PC-9 (cell line): ENCODE measurements at regions of chr12 and their contacts with region 1.

Region 1: DNA sequence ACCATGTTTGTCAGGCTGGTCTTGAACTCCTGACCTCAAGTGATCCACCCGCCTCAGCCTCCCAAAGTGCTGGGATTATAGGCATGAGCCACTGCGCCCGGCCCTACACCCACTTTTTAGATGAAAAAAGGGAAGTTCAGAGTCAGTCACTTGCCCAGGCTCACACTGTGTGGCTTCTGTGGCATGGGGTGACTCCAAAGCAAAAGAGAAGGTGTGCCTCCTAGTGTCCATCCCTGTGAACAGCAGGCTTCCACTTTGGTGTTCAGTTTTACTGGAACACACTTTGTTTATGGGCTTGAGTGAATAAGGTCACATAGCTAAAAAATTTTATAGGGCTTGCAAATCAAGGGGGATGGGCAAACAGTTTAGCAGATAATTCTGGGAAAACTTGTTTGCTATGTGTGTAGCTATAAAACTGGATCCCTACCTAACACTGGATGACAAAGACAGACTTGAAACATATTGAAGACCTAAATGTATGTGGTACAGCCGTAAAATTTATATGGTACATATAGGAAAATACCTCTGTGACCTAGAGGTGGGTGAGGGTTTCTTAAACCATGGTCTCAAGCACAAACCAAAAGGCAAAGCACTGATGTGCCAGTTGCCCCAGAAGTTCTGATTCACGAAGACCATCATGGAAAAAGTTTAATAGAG is 54.9 kb downstream of the EID3 start:
- DNase-seq: peak; percentile 64 to 68
- H3K4me3 ChIP-seq: no peak overlapping the region
- H3K27ac ChIP-seq: no peak overlapping the region
- H3K4me1 ChIP-seq: 0 out of 2 replicates have a peak, but pooled peaks cover 11% of the 10 kb centered on the region
- H3K27me3 ChIP-seq: no peaks in the 10 kb centered on the region
- CTCF ChIP-seq: peak; percentile 82

Region 2: GRCh38 chr12:104057771-104058197 is 300.7 kb before region 1 on chr12:
- CTCF ChIA-PET with region 1: no interaction called
- POLR2A ChIA-PET with region 1: no interaction called
- intact Hi-C with region 1: loop called (anchors 5 kb)
- DNase-seq: peak in 1 of 2 experiments; percentile 32
- H3K4me3 ChIP-seq: no peak overlapping the region
- H3K27ac ChIP-seq: no peak overlapping the region
- H3K4me1 ChIP-seq: peaks cover 15% of the 10 kb centered on the region; the same call in 1 of the 2 replicates
- H3K27me3 ChIP-seq: no peaks in the 10 kb centered on the region
- CTCF ChIP-seq: peak; percentile 82

Region 3: GRCh38 chr12:104215638-104216297 is 142.7 kb before region 1 on chr12 and contains the start of gene TXNRD1:
- CTCF ChIA-PET with region 1: no interaction called
- POLR2A ChIA-PET with region 1: interaction called, 9 read pairs
- intact Hi-C with region 1: loop called (anchors 10 kb)
- DNase-seq: peak; percentile 79 to 90
- H3K4me3 ChIP-seq: peak within 1 kb of the TSS; percentile 67
- H3K27ac ChIP-seq: peak within 1 kb of the TSS; percentile 99
- H3K4me1 ChIP-seq: peaks cover 56% of the 10 kb centered on the region
- H3K27me3 ChIP-seq: no peaks in the 10 kb centered on the region
- CTCF ChIP-seq: peak; percentile 88
- total RNA-seq, gene TXNRD1: 1,205 and 1,250 TPM in 2 replicates

Region 4: GRCh38 chr12:104615048-104615561 is 256.6 kb after region 1 on chr12:
- CTCF ChIA-PET with region 1: no interaction called
- POLR2A ChIA-PET with region 1: no interaction called
- intact Hi-C with region 1: no loop called
- DNase-seq: no peak
- H3K4me3 ChIP-seq: no peak overlapping the region
- H3K27ac ChIP-seq: no peak overlapping the region
- H3K4me1 ChIP-seq: 0 out of 2 replicates have a peak, but pooled peaks cover 2% of the 10 kb centered on the region
- H3K27me3 ChIP-seq: no peaks in the 10 kb centered on the region
- CTCF ChIP-seq: no peak

Region 5: DNA sequence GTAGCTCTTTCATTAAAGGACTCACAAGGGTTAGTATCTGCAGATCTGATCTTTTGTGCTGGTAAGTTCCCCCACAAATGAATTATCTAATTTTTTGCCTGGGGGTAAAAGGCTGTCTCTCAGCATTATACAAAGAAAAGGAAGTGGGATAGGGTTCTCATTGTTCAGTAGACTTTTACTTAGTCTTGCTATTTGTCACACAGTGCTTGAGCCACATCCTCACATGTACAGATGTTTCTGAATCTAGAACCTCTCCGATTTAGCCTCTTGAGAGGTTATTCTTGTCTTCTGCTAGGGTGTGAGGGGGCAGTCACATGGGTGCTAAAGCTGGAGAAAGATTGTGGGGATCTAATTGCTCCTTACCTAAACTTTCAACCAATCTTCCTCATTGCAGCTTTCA is 506.6 kb after region 1 on chr12:
- CTCF ChIA-PET with region 1: no interaction called
- POLR2A ChIA-PET with region 1: interaction called, 16 read pairs
- intact Hi-C with region 1: no loop called
- DNase-seq: no peak
- H3K4me3 ChIP-seq: no peak overlapping the region
- H3K27ac ChIP-seq: no peak overlapping the region
- H3K4me1 ChIP-seq: peaks cover 14% of the 10 kb centered on the region
- H3K27me3 ChIP-seq: no peaks in the 10 kb centered on the region
- CTCF ChIP-seq: no peak

Region 6: DNA sequence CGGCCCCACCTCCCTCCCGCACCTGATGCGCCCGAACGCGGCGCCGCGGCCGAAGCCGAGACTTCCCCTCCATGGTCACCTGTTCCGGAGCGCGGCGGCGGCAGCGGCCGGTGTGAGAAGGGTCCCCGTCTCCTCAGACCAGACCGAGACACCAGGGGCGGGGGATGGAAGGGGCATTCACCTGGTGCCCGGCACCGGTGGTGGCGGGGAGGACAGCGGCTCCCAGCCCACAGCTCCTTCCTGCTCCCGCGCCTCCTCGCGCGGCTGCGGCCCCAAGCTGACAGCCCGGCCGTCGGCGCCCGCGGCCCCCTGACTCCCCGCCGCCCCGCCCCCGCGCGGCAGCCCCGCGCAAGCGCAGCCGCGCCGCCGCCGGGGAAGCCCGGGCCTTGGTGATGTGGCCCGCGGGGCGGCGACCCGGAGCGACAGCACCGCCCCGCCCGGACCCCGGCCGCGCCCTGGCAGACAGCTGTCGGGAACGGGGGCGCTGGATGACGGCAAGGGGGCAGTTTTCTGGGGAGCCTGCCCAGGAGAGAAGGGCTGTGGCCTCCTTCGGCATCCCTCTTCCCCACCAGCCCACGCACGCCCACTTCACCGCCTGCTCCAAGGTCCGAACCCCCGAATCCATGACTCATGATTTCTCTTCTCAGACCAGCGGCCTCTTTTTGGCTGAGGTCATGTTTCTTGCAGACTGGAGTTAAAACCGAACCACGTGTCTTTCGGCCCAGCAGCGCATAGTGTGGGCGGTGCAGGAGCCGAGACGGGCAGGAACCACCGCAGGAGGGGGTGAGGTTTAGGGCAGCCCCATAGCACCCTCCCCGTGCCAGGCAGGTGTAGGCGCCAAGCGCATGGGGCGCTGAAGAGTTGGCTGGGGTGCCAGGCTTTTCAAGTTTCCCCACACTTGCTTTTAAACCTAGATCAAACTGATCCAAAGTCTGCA is 599.8 kb after region 1 on chr12 and contains the start of gene SLC41A2:
- CTCF ChIA-PET with region 1: no interaction called
- POLR2A ChIA-PET with region 1: no interaction called
- intact Hi-C with region 1: loop called (anchors 10 kb)
- DNase-seq: peak; percentile 85 to 90
- H3K4me3 ChIP-seq: peak within 1 kb of the TSS; percentile 80
- H3K27ac ChIP-seq: peak within 1 kb of the TSS; percentile 51
- H3K4me1 ChIP-seq: peaks cover 31% of the 10 kb centered on the region
- H3K27me3 ChIP-seq: no peaks in the 10 kb centered on the region
- CTCF ChIP-seq: peak; percentile 34; the same call in 1 of the 2 replicates
- total RNA-seq, gene SLC41A2: 12.7 and 14.8 TPM in 2 replicates

Region 7: GRCh38 chr12:105053116-105053572 is 694.7 kb after region 1 on chr12:
- CTCF ChIA-PET with region 1: no interaction called
- POLR2A ChIA-PET with region 1: no interaction called
- intact Hi-C with region 1: loop called (anchors 1 kb)
- DNase-seq: peak; percentile 65 to 70
- H3K4me3 ChIP-seq: no peak overlapping the region
- H3K27ac ChIP-seq: no peak overlapping the region
- H3K4me1 ChIP-seq: no peaks in the 10 kb centered on the region
- H3K27me3 ChIP-seq: no peaks in the 10 kb centered on the region
- CTCF ChIP-seq: peak; percentile 92

Region 8: GRCh38 chr12:105100998-105101397 is 742.5 kb after region 1 on chr12:
- CTCF ChIA-PET with region 1: no interaction called
- POLR2A ChIA-PET with region 1: no interaction called
- intact Hi-C with region 1: loop called (anchors 1 kb)
- DNase-seq: no peak
- H3K4me3 ChIP-seq: no peak overlapping the region
- H3K27ac ChIP-seq: no peak overlapping the region
- H3K4me1 ChIP-seq: peaks cover 16% of the 10 kb centered on the region
- H3K27me3 ChIP-seq: no peaks in the 10 kb centered on the region
- CTCF ChIP-seq: peak; percentile 27; the same call in 1 of the 2 replicates